ENCODE measurements at regions of chr15 and their contacts with region 1.

Region 1: GRCh38 chr15:58585693-58586443 is 154.1 kb downstream of the LIPC start:
- DNase-seq: no peak
- ATAC-seq: no peak
- H3K4me3 ChIP-seq: no peak overlapping the region
- H3K27ac ChIP-seq: no peak overlapping the region
- H3K4me1 ChIP-seq: peaks cover 0 to 36% (median 0%) of the 10 kb centered on the region in 12 donors
- H3K27me3 ChIP-seq: no peaks in the 10 kb centered on the region
- CTCF ChIP-seq: no peak
- POLR2A ChIP-seq: no peak

Region 2: GRCh38 chr15:58282060-58282708 is 303.7 kb before region 1 on chr15:
- intact Hi-C with region 1: loop called in 1 of 10 experiments (anchors 10 kb)
- DNase-seq: no peak
- ATAC-seq: no peak
- H3K4me3 ChIP-seq: no peak overlapping the region
- H3K27ac ChIP-seq: no peak overlapping the region
- H3K4me1 ChIP-seq: peaks cover 0 to 6% (median 0%) of the 10 kb centered on the region in 12 donors
- H3K27me3 ChIP-seq: no peaks in the 10 kb centered on the region
- CTCF ChIP-seq: no peak
- POLR2A ChIP-seq: no peak

Region 3: GRCh38 chr15:58535894-58536293 is 50.0 kb before region 1 on chr15:
- intact Hi-C with region 1: no loop called
- DNase-seq: no peak
- ATAC-seq: no peak
- H3K4me3 ChIP-seq: no peak overlapping the region
- H3K27ac ChIP-seq: no peak overlapping the region
- H3K4me1 ChIP-seq: no peaks in the 10 kb centered on the region
- H3K27me3 ChIP-seq: no peaks in the 10 kb centered on the region
- CTCF ChIP-seq: no peak
- POLR2A ChIP-seq: no peak

Region 4: DNA sequence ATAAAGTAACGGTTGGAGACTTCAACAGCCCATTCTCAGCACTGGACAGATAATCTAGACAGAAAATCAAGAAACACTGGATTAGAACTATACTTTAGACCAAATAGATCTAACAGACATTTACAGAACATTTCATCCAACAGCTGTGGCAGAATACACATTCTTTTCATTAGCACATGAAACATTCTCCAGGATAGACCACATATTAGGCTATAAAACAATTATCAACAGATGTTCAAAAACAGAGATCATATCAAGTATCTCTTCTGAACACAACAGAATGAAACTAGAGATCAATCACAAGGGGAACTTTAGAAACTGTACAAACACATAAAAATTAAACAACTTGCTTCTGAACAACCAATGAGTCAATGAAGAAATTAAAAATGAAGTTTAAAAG is 30.3 kb after region 1 on chr15:
- intact Hi-C with region 1: no loop called
- DNase-seq: no peak
- ATAC-seq: no peak
- H3K4me3 ChIP-seq: no peak overlapping the region
- H3K27ac ChIP-seq: no peak overlapping the region
- H3K4me1 ChIP-seq: no peaks in the 10 kb centered on the region
- H3K27me3 ChIP-seq: no peaks in the 10 kb centered on the region
- CTCF ChIP-seq: no peak
- POLR2A ChIP-seq: no peak